CD4-positive, alpha-beta memory T cell (primary cell): ENCODE measurements at regions of chr17 and their contacts with region 1.

Region 1: DNA sequence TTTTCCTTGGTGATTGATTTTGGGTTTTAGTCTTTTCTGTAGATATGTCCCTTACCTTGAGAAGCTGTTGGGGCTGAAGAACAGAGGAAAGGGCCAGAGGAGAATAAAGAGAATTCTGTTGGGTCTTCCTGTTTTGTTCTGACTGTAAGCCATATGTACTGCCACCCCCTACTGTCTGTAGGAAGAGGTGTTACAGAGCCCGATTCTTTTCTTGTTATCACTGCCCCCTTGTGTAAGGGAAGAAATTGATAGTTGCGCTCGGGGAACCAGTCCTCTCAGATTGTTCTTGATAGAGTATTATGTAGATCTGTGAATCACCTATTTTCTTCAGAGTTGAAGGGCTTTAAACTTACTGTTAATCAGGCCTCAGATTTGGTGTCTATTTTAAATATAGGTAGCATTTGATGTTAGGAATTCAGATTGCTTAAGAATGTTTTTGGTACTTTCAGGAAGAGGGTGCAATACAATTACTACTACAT is 2.4 kb downstream of the TANC2 start:
- DNase-seq: peak; percentile 69 to 79 (median 74)
- H3K4me3 ChIP-seq: no peak overlapping the region
- H3K4me3 Mint-ChIP-seq: peak overlapping the region; percentile 49 to 87 (median 63)
- H3K27ac ChIP-seq: no peak overlapping the region
- H3K27ac Mint-ChIP-seq: peak overlapping the region in 4 of 7 donors; percentile 24 to 89 (median 67)
- H3K4me1 ChIP-seq: peaks cover 30% of the 10 kb centered on the region
- H3K4me1 Mint-ChIP-seq: peaks cover 23 to 35% (median 30%) of the 10 kb centered on the region in 4 donors
- H3K27me3 ChIP-seq: no peaks in the 10 kb centered on the region
- H3K27me3 Mint-ChIP-seq: no peaks in the 10 kb centered on the region

Region 2: DNA sequence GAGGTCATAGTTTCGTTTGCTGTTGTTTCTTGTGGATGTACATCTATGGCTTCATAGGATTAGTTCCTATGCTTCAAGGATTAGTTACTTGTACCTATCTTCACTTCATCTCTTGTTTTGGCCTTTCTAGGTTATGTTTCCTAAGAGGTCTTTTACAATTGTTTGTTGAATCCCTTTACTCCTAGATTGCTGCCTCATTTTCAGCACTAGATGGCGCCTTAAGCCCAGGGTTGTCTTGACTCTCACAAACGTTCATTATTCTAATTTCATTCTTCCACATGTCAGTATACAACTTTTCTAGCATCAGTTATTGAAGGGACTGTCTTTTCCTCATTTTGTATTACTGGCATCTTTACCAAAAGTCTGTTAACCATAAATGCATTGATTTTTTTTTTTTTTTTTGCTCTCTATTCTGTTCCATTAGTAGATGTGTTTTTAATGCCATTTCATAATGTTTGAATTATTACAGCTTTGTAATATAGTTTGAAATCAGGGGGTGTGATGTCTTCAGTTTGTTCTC is 1332.5 kb before region 1 on chr17:
- CTCF ChIA-PET with region 1: no interaction called
- POLR2A ChIA-PET with region 1: no interaction called
- intact Hi-C with region 1: loop called (anchors 5 kb)
- DNase-seq: peak; percentile 33 to 50 (median 43)
- H3K4me3 ChIP-seq: no peak overlapping the region
- H3K4me3 Mint-ChIP-seq: no peak overlapping the region
- H3K27ac ChIP-seq: no peak overlapping the region
- H3K27ac Mint-ChIP-seq: no peak overlapping the region
- H3K4me1 ChIP-seq: no peaks in the 10 kb centered on the region
- H3K4me1 Mint-ChIP-seq: no peaks in the 10 kb centered on the region
- H3K27me3 ChIP-seq: no peaks in the 10 kb centered on the region
- H3K27me3 Mint-ChIP-seq: peaks cover 32 to 36% of the 10 kb centered on the region in 2 donors

Region 3: DNA sequence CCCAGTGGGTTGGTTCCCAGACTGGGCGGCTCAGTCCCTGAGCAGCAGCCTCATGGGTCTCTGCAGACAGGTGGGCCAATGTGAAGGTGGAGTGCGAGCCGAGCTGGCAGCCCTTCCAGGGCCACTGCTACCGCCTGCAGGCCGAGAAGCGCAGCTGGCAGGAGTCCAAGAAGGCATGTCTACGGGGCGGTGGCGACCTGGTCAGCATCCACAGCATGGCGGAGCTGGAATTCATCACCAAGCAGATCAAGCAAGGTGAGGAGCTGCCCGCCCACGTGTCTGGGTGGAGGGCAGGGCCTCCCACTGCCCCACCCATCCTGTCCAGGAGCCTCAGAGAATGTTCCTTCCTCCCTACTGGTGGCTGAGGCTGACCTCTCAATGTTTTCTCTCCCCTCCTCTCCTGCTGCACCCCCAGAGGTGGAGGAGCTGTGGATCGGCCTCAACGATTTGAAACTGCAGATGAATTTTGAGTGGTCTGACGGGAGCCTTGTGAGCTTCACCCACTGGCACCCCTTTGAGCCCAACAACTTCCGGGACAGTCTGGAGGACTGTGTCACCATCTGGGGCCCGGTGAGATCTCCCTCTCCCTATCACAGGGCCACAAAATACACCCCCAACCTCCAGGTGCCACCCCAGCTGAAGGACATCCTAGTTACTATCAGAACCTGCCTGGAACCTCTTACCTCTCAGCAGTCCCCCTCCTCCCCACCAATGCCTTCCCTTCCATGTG is 296.7 kb before region 1 on chr17:
- CTCF ChIA-PET with region 1: interaction called, 4 read pairs
- POLR2A ChIA-PET with region 1: no interaction called
- intact Hi-C with region 1: loop called (anchors 1 kb)
- DNase-seq: no peak
- H3K4me3 ChIP-seq: no peak overlapping the region
- H3K4me3 Mint-ChIP-seq: no peak overlapping the region
- H3K27ac ChIP-seq: no peak overlapping the region
- H3K27ac Mint-ChIP-seq: peak overlapping the region in 1 of 7 donors; percentile 55
- H3K4me1 ChIP-seq: no peaks in the 10 kb centered on the region
- H3K4me1 Mint-ChIP-seq: peaks cover 0 to 4% (median 3%) of the 10 kb centered on the region in 4 donors
- H3K27me3 ChIP-seq: no peaks in the 10 kb centered on the region
- H3K27me3 Mint-ChIP-seq: no peaks in the 10 kb centered on the region

Region 4: GRCh38 chr17:62703775-62704378 is 264.6 kb before region 1 on chr17:
- CTCF ChIA-PET with region 1: interaction called, 10 read pairs
- POLR2A ChIA-PET with region 1: interaction called, 3 read pairs
- intact Hi-C with region 1: loop called (anchors 1 kb)
- DNase-seq: peak in 4 of 5 donors; percentile 69 to 82 (median 72)
- H3K4me3 ChIP-seq: peak overlapping the region in 1 of 2 donors; percentile 32
- H3K4me3 Mint-ChIP-seq: peak overlapping the region in 5 of 8 donors; percentile 20 to 49 (median 34)
- H3K27ac ChIP-seq: no peak overlapping the region
- H3K27ac Mint-ChIP-seq: peak overlapping the region in 1 of 7 donors; percentile 10
- H3K4me1 ChIP-seq: peaks cover 10% of the 10 kb centered on the region
- H3K4me1 Mint-ChIP-seq: peaks cover 3 to 19% (median 4%) of the 10 kb centered on the region in 4 donors
- H3K27me3 ChIP-seq: no peaks in the 10 kb centered on the region
- H3K27me3 Mint-ChIP-seq: peaks cover 3% of the 10 kb centered on the region in 2 donors

Region 5: DNA sequence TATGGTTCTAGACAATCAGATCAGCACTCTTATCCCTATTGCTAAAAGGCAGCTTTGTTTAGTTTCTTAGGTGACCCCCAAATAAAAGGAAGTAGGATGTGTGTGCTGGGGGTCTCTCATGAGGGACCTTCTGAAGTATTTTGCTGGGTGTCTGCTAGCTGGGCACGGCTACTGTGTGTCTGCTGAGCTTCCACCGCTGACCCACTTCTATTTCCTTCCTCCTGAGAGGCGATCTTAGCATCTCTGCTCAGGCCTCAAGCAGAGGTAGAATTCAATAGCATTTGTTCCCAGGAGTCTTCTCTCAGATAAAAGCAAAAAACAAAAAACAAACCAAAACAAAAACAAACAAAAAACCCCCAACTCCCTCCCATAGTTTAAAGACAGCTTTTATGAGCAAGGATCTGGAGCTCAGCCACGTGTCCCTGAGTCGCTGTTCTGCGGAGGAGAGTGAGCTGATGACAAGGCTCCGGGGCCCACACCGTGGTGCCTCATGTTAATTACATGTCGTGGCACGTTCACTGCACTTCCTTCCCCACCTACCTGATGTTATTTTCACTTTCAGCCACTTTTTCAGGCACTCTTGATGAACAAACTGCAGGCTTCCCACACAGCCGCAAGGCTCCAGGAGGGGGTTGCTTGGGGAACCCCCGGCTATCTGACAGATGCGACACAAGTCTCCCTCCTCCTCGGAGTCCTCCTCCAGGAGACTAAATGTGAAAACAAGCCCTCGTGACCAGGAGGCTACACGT is 243.9 kb before region 1 on chr17:
- CTCF ChIA-PET with region 1: interaction called, 5 read pairs
- POLR2A ChIA-PET with region 1: interaction called, 23 read pairs
- intact Hi-C with region 1: loop called (anchors 1 kb)
- DNase-seq: peak; percentile 72 to 84 (median 78)
- H3K4me3 ChIP-seq: no peak overlapping the region
- H3K4me3 Mint-ChIP-seq: peak overlapping the region; percentile 74 to 87 (median 85)
- H3K27ac ChIP-seq: peak overlapping the region; percentile 61
- H3K27ac Mint-ChIP-seq: peak overlapping the region; percentile 87 to 100 (median 98)
- H3K4me1 ChIP-seq: peaks cover 29% of the 10 kb centered on the region
- H3K4me1 Mint-ChIP-seq: peaks cover 18 to 34% (median 28%) of the 10 kb centered on the region in 4 donors
- H3K27me3 ChIP-seq: peaks cover 3% of the 10 kb centered on the region
- H3K27me3 Mint-ChIP-seq: peaks cover 0 to 4% of the 10 kb centered on the region in 2 donors

Region 6: GRCh38 chr17:62750631-62751358 is 217.7 kb before region 1 on chr17:
- CTCF ChIA-PET with region 1: no interaction called
- POLR2A ChIA-PET with region 1: no interaction called
- intact Hi-C with region 1: no loop called
- DNase-seq: no peak
- H3K4me3 ChIP-seq: no peak overlapping the region
- H3K4me3 Mint-ChIP-seq: no peak overlapping the region
- H3K27ac ChIP-seq: no peak overlapping the region
- H3K27ac Mint-ChIP-seq: no peak overlapping the region
- H3K4me1 ChIP-seq: no peaks in the 10 kb centered on the region
- H3K4me1 Mint-ChIP-seq: peaks cover 0 to 2% (median 0%) of the 10 kb centered on the region in 4 donors
- H3K27me3 ChIP-seq: no peaks in the 10 kb centered on the region
- H3K27me3 Mint-ChIP-seq: peaks cover 0 to 1% of the 10 kb centered on the region in 2 donors

Region 7: GRCh38 chr17:62950086-62950485 is 18.4 kb before region 1 on chr17:
- CTCF ChIA-PET with region 1: no interaction called
- POLR2A ChIA-PET with region 1: no interaction called
- intact Hi-C with region 1: no loop called
- DNase-seq: no peak
- H3K4me3 ChIP-seq: no peak overlapping the region
- H3K4me3 Mint-ChIP-seq: no peak overlapping the region
- H3K27ac ChIP-seq: no peak overlapping the region
- H3K27ac Mint-ChIP-seq: no peak overlapping the region
- H3K4me1 ChIP-seq: no peaks in the 10 kb centered on the region
- H3K4me1 Mint-ChIP-seq: no peaks in the 10 kb centered on the region
- H3K27me3 ChIP-seq: no peaks in the 10 kb centered on the region
- H3K27me3 Mint-ChIP-seq: peaks cover 6 to 7% of the 10 kb centered on the region in 2 donors